ENCODE measurements at regions of chr17 and their contacts with region 1.

Region 1: DNA sequence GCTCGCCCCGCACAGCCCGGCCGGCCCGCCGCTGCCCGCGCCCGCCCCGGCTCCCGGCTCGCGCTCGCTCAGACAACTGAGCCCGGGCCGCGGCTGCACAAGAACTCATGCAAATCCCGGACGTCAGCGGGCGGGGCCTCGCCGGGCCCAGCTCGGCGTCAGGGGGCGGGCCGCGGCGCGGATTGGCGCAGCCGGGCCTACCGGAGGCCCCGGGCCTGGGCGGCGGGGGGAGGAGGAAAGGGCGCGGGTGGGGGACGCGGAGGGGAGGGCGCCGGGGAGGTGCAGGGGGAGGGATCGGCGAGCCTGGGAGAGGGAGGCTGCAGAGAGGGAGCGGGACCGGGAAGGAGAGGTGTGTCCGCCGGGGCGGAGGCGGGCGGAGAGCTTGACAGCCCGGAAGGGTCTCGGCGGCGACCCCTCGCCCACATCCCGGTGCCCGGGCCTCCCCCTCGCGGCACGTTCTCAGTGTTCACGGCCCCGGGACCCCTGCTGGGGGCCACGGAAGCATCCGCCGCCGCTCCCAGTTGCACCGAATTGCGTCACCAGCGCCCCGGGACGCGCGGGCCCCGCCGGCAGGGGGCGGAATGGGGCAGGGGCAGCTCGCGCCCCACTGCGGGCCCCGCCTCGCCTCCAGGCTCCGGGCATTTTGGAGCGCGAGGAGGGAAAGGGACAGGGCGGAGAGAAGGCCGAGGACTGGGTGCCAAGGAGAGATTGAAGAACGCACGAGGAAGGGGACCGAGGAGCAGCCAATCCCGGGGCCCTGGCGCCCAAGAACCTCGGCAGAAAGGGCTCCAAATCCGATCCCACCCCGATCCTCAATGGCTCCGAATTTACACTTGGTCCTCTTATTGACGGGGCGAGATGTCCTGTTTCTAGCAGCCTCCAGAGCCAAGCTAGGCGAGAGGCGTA is at the start of gene CBX4:
- DNase-seq: peak; percentile 97 to 98
- ATAC-seq: peak; percentile 88
- H3K4me3 ChIP-seq: peak within 1 kb of the TSS; percentile 70 to 72
- H3K27ac ChIP-seq: peak within 1 kb of the TSS; percentile 15 to 74
- H3K4me1 ChIP-seq: no peaks in the 10 kb centered on the region
- H3K27me3 ChIP-seq: no peaks in the 10 kb centered on the region
- total RNA-seq, gene CBX4: 10.7 to 13.4 TPM

Region 2: GRCh38 chr17:79796763-79797491 is 42.7 kb before region 1 on chr17 and contains the start of gene CBX8:
- intact Hi-C with region 1: loop called (anchors 2 to 5 kb)
- DNase-seq: peak; percentile 100
- ATAC-seq: peak; percentile 96
- H3K4me3 ChIP-seq: peak within 1 kb of the TSS; percentile 55 to 87
- H3K27ac ChIP-seq: no peak within 1 kb of the TSS
- H3K4me1 ChIP-seq: no peaks in the 10 kb centered on the region
- H3K27me3 ChIP-seq: no peaks in the 10 kb centered on the region
- total RNA-seq, gene CBX8: 5.3 to 6.2 TPM

Region 3: GRCh38 chr17:79808763-79809529 is 30.7 kb before region 1 on chr17:
- intact Hi-C with region 1: loop called in 1 of 2 experiments (anchors 5 kb)
- DNase-seq: no peak
- ATAC-seq: no peak
- H3K4me3 ChIP-seq: no peak overlapping the region
- H3K27ac ChIP-seq: no peak overlapping the region
- H3K4me1 ChIP-seq: no peaks in the 10 kb centered on the region
- H3K27me3 ChIP-seq: no peaks in the 10 kb centered on the region

Region 4: DNA sequence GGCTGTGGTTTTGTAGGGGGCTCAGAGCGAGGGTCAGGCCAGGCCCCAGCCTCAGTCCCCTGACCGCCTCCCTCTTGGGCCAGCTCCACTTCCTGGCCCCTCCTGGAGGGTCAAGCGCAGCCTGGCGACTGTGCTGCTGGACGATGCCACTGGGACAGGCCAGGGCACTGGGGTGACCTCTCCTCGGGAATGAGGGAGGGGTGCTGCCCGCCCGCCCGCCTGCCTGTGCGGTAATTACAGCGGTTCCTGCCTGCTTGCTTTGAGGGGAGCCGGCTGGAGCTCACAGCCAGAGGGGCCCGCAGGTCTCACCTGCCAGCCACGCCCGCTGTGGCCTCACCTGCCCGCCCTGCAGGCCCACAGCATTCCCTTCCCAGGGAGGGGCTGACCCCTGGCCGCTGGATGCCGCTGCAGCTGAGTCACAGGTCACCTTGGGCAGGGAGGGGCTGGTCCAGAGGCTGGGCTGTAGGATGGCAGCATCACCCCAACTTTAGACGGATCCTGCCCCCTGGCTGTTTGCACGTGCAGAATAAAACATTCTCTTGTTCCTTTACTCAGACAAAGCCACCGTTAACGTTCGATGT is 76.3 kb after region 1 on chr17:
- intact Hi-C with region 1: loop called in 1 of 2 experiments (anchors 5 kb)
- DNase-seq: peak in 1 of 2 donors; percentile 76
- ATAC-seq: no peak
- H3K4me3 ChIP-seq: no peak overlapping the region
- H3K27ac ChIP-seq: no peak overlapping the region
- H3K4me1 ChIP-seq: no peaks in the 10 kb centered on the region
- H3K27me3 ChIP-seq: no peaks in the 10 kb centered on the region

Region 5: DNA sequence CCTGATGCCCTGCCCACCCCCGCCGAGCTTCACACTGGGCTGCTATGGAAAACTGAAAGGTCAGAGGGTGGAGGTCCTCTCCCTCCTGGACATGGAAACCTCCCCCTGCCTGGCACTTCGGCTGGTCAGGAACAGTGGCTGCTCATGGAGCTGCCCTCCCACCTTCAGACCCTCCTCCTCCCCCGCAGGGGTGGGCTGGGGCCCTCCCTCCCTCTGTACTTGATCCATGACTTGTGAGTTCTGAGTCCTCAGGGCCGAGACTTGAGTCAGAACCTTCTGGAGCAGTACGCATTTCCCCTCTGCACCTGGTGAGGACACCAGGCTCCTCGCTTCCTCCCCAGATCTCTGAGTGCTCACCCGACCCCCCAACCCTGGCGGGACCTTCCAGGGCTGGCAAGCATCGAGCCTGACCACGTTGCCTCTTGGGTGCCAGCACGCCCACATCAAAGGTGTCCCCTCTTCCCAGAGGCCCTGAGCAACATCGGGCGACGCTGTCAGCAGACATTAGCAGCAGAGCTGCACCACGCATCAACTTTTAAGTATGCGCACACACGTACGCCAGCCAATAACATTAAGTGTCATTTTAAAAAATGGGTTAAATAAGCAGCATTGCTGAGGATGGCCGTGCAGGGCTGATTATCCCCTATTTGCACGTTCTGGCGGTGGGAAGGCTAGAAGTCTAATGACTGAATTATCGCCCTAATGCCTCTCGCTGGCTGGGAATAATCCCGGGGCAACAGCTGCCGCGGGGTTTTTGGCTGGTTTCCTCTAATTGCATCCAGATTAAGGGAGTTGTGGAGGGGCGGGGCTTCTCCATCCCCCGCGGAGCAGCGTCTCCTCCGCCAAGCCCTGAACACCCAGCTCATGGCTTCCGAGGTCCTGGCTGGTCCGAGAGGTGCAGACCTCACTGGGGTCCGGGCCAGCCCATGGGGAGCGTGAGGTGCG is 98.0 kb after region 1 on chr17:
- intact Hi-C with region 1: no loop called
- DNase-seq: no peak
- ATAC-seq: no peak
- H3K4me3 ChIP-seq: no peak overlapping the region
- H3K27ac ChIP-seq: no peak overlapping the region
- H3K4me1 ChIP-seq: no peaks in the 10 kb centered on the region
- H3K27me3 ChIP-seq: no peaks in the 10 kb centered on the region

Region 6: GRCh38 chr17:79951361-79952264 is 112.0 kb after region 1 on chr17:
- intact Hi-C with region 1: no loop called
- DNase-seq: peak; percentile 71 to 82
- ATAC-seq: peak; percentile 65
- H3K4me3 ChIP-seq: no peak overlapping the region
- H3K27ac ChIP-seq: no peak overlapping the region
- H3K4me1 ChIP-seq: no peaks in the 10 kb centered on the region
- H3K27me3 ChIP-seq: no peaks in the 10 kb centered on the region

Region 7: GRCh38 chr17:79991140-79991923 is 151.7 kb after region 1 on chr17:
- intact Hi-C with region 1: loop called in 1 of 2 experiments (anchors 5 kb)
- DNase-seq: peak; percentile 86 to 93
- ATAC-seq: peak; percentile 74
- H3K4me3 ChIP-seq: no peak overlapping the region
- H3K27ac ChIP-seq: no peak overlapping the region
- H3K4me1 ChIP-seq: no peaks in the 10 kb centered on the region
- H3K27me3 ChIP-seq: no peaks in the 10 kb centered on the region